CD4-positive, alpha-beta T cell (primary cell): ENCODE measurements at regions of chr21 and their contacts with region 1.

Region 1: GRCh38 chr21:15483138-15483780 is 246.5 kb upstream of the USP25 start:
- DNase-seq: peak; percentile 58 to 86 (median 68)
- ATAC-seq: peak; percentile 98
- H3K4me3 ChIP-seq: no peak overlapping the region
- H3K4me3 Mint-ChIP-seq: no peak overlapping the region
- H3K27ac ChIP-seq: no peak overlapping the region
- H3K27ac Mint-ChIP-seq: no peak overlapping the region
- H3K4me1 ChIP-seq: peaks cover 4% of the 10 kb centered on the region
- H3K4me1 Mint-ChIP-seq: peaks cover 32% of the 10 kb centered on the region
- H3K27me3 ChIP-seq: no peaks in the 10 kb centered on the region
- H3K27me3 Mint-ChIP-seq: no peaks in the 10 kb centered on the region
- CTCF ChIP-seq: peak; percentile 95

Region 2: DNA sequence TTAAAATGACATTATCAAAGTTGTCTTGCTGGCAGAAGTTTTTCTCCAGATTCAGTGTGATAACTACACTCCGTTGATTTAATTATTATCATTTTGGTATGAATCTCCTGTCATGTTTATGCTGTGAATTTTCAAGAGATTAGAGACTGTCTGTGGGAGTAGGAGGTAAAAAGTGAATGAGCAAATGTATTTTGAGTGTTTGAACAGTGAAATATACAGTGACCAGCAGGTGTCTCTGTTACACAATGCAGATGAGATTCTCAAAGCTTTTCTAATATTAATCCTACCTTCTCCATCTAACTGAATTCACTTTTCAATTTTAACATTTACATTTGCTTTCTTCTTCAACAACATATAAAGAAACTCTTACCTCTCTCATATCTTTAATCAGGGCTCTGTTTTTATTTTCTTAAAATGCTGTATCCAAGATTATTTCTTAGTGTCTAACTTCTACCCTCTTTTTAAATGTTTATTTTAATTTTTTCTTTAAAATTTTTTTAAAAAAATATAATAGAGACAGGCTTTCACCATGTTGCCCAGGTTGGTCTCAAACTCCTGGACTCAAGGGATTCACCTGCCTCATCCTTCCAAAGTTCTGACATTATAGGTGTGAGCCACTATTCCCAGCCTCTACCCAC is 1079.5 kb before region 1 on chr21:
- CTCF ChIA-PET with region 1: no interaction called
- POLR2A ChIA-PET with region 1: no interaction called
- intact Hi-C with region 1: loop called (anchors 1 to 5 kb)
- DNase-seq: peak in 4 of 14 experiments; percentile 12 to 70 (median 54)
- ATAC-seq: no peak
- H3K4me3 ChIP-seq: no peak overlapping the region
- H3K4me3 Mint-ChIP-seq: no peak overlapping the region
- H3K27ac ChIP-seq: no peak overlapping the region
- H3K27ac Mint-ChIP-seq: no peak overlapping the region
- H3K4me1 ChIP-seq: no peaks in the 10 kb centered on the region
- H3K4me1 Mint-ChIP-seq: no peaks in the 10 kb centered on the region
- H3K27me3 ChIP-seq: no peaks in the 10 kb centered on the region
- H3K27me3 Mint-ChIP-seq: no peaks in the 10 kb centered on the region
- CTCF ChIP-seq: peak; percentile 76

Region 3: GRCh38 chr21:14864211-14865021 is 618.8 kb before region 1 on chr21:
- CTCF ChIA-PET with region 1: no interaction called
- POLR2A ChIA-PET with region 1: interaction called, 3 read pairs
- intact Hi-C with region 1: loop called (anchors 2 kb)
- DNase-seq: peak in 5 of 14 experiments; percentile 7 to 66 (median 24)
- ATAC-seq: peak; percentile 49
- H3K4me3 ChIP-seq: no peak overlapping the region
- H3K4me3 Mint-ChIP-seq: no peak overlapping the region
- H3K27ac ChIP-seq: no peak overlapping the region
- H3K27ac Mint-ChIP-seq: no peak overlapping the region
- H3K4me1 ChIP-seq: no peaks in the 10 kb centered on the region
- H3K4me1 Mint-ChIP-seq: peaks cover 6% of the 10 kb centered on the region
- H3K27me3 ChIP-seq: no peaks in the 10 kb centered on the region
- H3K27me3 Mint-ChIP-seq: no peaks in the 10 kb centered on the region
- CTCF ChIP-seq: peak; percentile 29

Region 4: DNA sequence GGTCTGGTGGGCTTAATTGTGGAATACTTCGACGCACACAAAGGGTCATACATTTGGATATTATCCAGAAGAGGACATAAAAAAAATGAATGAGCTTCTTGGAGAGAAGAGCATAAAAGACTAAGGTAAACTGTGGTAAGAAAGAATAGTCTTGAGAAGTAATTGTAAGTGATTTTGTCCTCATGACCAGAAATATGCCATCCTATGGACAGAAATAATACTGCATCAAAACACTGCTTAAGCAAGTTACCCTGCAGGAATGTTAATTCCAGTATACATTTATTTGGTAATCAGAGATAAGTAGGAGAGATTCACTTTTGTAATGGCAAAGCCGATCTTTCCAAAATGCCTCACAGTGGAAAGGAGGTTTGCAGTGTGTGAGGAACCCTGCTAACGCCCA is 530.3 kb before region 1 on chr21:
- CTCF ChIA-PET with region 1: no interaction called
- POLR2A ChIA-PET with region 1: no interaction called
- intact Hi-C with region 1: no loop called
- DNase-seq: no peak
- ATAC-seq: no peak
- H3K4me3 ChIP-seq: no peak overlapping the region
- H3K4me3 Mint-ChIP-seq: no peak overlapping the region
- H3K27ac ChIP-seq: no peak overlapping the region
- H3K27ac Mint-ChIP-seq: no peak overlapping the region
- H3K4me1 ChIP-seq: no peaks in the 10 kb centered on the region
- H3K4me1 Mint-ChIP-seq: no peaks in the 10 kb centered on the region
- H3K27me3 ChIP-seq: no peaks in the 10 kb centered on the region
- H3K27me3 Mint-ChIP-seq: no peaks in the 10 kb centered on the region
- CTCF ChIP-seq: no peak

Region 5: GRCh38 chr21:15308333-15308732 is 174.9 kb before region 1 on chr21:
- CTCF ChIA-PET with region 1: no interaction called
- POLR2A ChIA-PET with region 1: no interaction called
- intact Hi-C with region 1: no loop called
- DNase-seq: no peak
- ATAC-seq: no peak
- H3K4me3 ChIP-seq: no peak overlapping the region
- H3K4me3 Mint-ChIP-seq: no peak overlapping the region
- H3K27ac ChIP-seq: no peak overlapping the region
- H3K27ac Mint-ChIP-seq: no peak overlapping the region
- H3K4me1 ChIP-seq: no peaks in the 10 kb centered on the region
- H3K4me1 Mint-ChIP-seq: no peaks in the 10 kb centered on the region
- H3K27me3 ChIP-seq: no peaks in the 10 kb centered on the region
- H3K27me3 Mint-ChIP-seq: peaks cover 5% of the 10 kb centered on the region
- CTCF ChIP-seq: no peak

Region 6: GRCh38 chr21:15508554-15508953 is 25.3 kb after region 1 on chr21:
- CTCF ChIA-PET with region 1: no interaction called
- POLR2A ChIA-PET with region 1: no interaction called
- intact Hi-C with region 1: loop called in 1 of 2 experiments (anchors 2 kb)
- DNase-seq: peak in 1 of 14 experiments; percentile 41
- ATAC-seq: no peak
- H3K4me3 ChIP-seq: no peak overlapping the region
- H3K4me3 Mint-ChIP-seq: no peak overlapping the region
- H3K27ac ChIP-seq: no peak overlapping the region
- H3K27ac Mint-ChIP-seq: no peak overlapping the region
- H3K4me1 ChIP-seq: peaks cover under 1% of the 10 kb centered on the region
- H3K4me1 Mint-ChIP-seq: peaks cover 7% of the 10 kb centered on the region
- H3K27me3 ChIP-seq: no peaks in the 10 kb centered on the region
- H3K27me3 Mint-ChIP-seq: no peaks in the 10 kb centered on the region
- CTCF ChIP-seq: no peak

Region 7: GRCh38 chr21:15552914-15553494 is 69.7 kb after region 1 on chr21:
- CTCF ChIA-PET with region 1: interaction called, 4 read pairs
- POLR2A ChIA-PET with region 1: interaction called, 5 read pairs
- intact Hi-C with region 1: loop called (anchors 2 to 5 kb)
- DNase-seq: peak in 3 of 14 experiments; percentile 32 to 41 (median 35)
- ATAC-seq: peak; percentile 61
- H3K4me3 ChIP-seq: no peak overlapping the region
- H3K4me3 Mint-ChIP-seq: no peak overlapping the region
- H3K27ac ChIP-seq: no peak overlapping the region
- H3K27ac Mint-ChIP-seq: no peak overlapping the region
- H3K4me1 ChIP-seq: peaks cover 11% of the 10 kb centered on the region
- H3K4me1 Mint-ChIP-seq: peaks cover 18% of the 10 kb centered on the region
- H3K27me3 ChIP-seq: no peaks in the 10 kb centered on the region
- H3K27me3 Mint-ChIP-seq: no peaks in the 10 kb centered on the region
- CTCF ChIP-seq: peak; percentile 75

Region 8: GRCh38 chr21:15669247-15669646 is 186.0 kb after region 1 on chr21:
- CTCF ChIA-PET with region 1: no interaction called
- POLR2A ChIA-PET with region 1: no interaction called
- intact Hi-C with region 1: no loop called
- DNase-seq: no peak
- ATAC-seq: no peak
- H3K4me3 ChIP-seq: no peak overlapping the region
- H3K4me3 Mint-ChIP-seq: no peak overlapping the region
- H3K27ac ChIP-seq: no peak overlapping the region
- H3K27ac Mint-ChIP-seq: no peak overlapping the region
- H3K4me1 ChIP-seq: no peaks in the 10 kb centered on the region
- H3K4me1 Mint-ChIP-seq: no peaks in the 10 kb centered on the region
- H3K27me3 ChIP-seq: no peaks in the 10 kb centered on the region
- H3K27me3 Mint-ChIP-seq: no peaks in the 10 kb centered on the region
- CTCF ChIP-seq: no peak